Transverse colon (tissue), 4 donors: ENCODE measurements at regions of chr1 and their contacts with region 1.

Region 1: GRCh38 chr1:203273206-203273868 is 32.0 kb upstream of the BTG2 start:
- DNase-seq: peak; percentile 92
- H3K4me3 ChIP-seq: peak overlapping the region in 2 of 4 donors; percentile 25 to 30
- H3K27ac ChIP-seq: peak overlapping the region; percentile 83 to 89 (median 87)
- H3K4me1 ChIP-seq: peaks cover 33 to 73% (median 49%) of the 10 kb centered on the region in 4 donors
- H3K27me3 ChIP-seq: no peaks in the 10 kb centered on the region
- CTCF ChIP-seq: peak; percentile 97 to 100 (median 99)
- EP300 ChIP-seq: no peak
- POLR2A ChIP-seq: no peak

Region 2: DNA sequence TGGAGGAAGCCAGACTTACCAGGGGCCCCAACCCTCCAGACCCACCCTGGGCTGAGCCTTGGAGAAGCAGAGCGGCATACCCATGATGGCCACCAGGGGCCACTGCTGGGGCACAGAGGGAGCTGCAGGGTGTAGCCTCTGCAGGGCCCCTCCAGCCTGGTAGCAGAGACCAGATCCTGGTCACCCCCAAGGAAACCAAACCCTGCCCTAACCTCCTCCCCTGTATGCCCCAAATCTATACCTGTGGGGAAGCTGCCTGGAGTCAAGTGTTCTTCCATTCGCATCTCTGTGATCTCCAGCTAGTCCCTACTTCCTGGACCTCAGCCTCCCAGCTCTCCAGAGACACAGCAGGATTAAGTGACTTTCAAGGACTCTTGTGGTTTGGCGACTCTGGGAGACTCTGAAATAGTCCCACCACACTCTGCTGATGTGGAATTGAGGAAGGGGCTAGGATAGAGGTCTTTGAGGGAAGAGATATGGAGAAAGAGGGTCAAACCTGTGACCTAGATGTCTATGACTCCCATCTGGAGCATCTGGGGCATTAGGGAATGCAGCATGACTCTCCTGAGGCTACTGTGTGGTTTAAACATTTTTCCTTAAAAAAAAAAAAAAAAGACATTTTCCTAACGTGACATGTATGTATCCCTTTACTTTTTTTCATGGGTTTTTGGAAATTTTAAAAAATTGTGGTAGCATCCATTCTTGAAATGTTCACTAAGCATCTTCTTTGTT is 1563.6 kb before region 1 on chr1:
- in situ Hi-C with region 1: no loop called
- intact Hi-C with region 1: loop called (anchors 5 kb)
- DNase-seq: peak; percentile 77
- H3K4me3 ChIP-seq: no peak overlapping the region
- H3K27ac ChIP-seq: peak overlapping the region in 2 of 4 donors; percentile 15 to 49
- H3K4me1 ChIP-seq: peaks cover 32 to 46% (median 38%) of the 10 kb centered on the region in 4 donors
- H3K27me3 ChIP-seq: no peaks in the 10 kb centered on the region
- CTCF ChIP-seq: peak; percentile 87 to 92 (median 91)
- EP300 ChIP-seq: no peak
- POLR2A ChIP-seq: no peak

Region 3: DNA sequence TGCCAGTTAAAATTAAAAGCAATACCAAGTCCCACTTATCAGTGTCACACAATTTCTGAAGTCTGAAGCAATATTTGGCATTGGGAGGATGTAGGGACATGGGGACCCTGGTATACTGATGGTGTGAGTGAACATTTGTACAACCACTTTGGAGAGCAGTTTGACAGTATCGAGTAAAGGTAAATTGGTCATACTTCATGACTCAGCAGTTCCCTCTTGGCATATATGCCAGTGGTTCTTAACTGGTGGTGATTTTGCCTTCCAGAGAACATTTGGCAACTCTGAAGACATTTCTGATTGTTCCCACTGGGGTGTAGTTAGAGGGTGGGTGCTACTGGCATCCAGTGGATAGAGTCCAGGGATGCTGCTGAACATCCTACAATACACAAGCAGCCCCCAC is 57.9 kb after region 1 on chr1:
- in situ Hi-C with region 1: loop called (anchors 5 kb)
- intact Hi-C with region 1: no loop called
- DNase-seq: no peak
- H3K4me3 ChIP-seq: no peak overlapping the region
- H3K27ac ChIP-seq: no peak overlapping the region
- H3K4me1 ChIP-seq: peaks cover 19 to 30% (median 28%) of the 10 kb centered on the region in 4 donors
- H3K27me3 ChIP-seq: no peaks in the 10 kb centered on the region
- CTCF ChIP-seq: no peak
- EP300 ChIP-seq: no peak
- POLR2A ChIP-seq: no peak

Region 4: DNA sequence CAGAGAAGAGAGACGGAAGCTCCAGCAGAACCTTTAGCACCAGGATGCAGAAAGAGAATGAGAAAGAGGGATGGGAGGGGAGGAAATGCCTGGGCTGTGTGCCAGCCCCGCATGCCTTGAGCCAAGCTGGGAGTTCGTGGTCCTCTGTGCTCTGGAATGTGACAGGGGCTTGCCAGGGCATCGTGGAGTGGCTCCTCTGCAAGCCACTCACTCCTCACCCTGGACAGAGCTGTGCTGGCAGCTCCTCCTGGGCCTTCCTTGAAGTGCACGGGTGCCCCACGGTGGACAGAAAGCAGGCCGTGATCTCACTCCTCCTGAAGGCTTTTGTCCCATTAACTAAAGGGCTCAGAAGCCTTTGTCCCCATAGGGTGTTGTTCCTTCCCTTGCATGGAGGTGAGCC is 167.4 kb after region 1 on chr1:
- in situ Hi-C with region 1: loop called in 2 of 4 experiments (anchors 10 to 25 kb)
- intact Hi-C with region 1: no loop called
- DNase-seq: peak; percentile 83
- H3K4me3 ChIP-seq: no peak overlapping the region
- H3K27ac ChIP-seq: peak overlapping the region; percentile 24 to 47 (median 26)
- H3K4me1 ChIP-seq: peaks cover 17 to 29% (median 19%) of the 10 kb centered on the region in 4 donors
- H3K27me3 ChIP-seq: no peaks in the 10 kb centered on the region
- CTCF ChIP-seq: peak; percentile 61 to 78 (median 71)
- EP300 ChIP-seq: no peak
- POLR2A ChIP-seq: no peak

Region 5: GRCh38 chr1:203480525-203481084 is 207.3 kb after region 1 on chr1:
- in situ Hi-C with region 1: loop called in 3 of 4 experiments (anchors 10 kb)
- intact Hi-C with region 1: loop called (anchors 5 kb)
- DNase-seq: peak; percentile 91
- H3K4me3 ChIP-seq: no peak overlapping the region
- H3K27ac ChIP-seq: peak overlapping the region; percentile 75 to 89 (median 80)
- H3K4me1 ChIP-seq: peaks cover 9 to 34% (median 19%) of the 10 kb centered on the region in 4 donors
- H3K27me3 ChIP-seq: no peaks in the 10 kb centered on the region
- CTCF ChIP-seq: no peak
- EP300 ChIP-seq: no peak
- POLR2A ChIP-seq: no peak

Region 6: DNA sequence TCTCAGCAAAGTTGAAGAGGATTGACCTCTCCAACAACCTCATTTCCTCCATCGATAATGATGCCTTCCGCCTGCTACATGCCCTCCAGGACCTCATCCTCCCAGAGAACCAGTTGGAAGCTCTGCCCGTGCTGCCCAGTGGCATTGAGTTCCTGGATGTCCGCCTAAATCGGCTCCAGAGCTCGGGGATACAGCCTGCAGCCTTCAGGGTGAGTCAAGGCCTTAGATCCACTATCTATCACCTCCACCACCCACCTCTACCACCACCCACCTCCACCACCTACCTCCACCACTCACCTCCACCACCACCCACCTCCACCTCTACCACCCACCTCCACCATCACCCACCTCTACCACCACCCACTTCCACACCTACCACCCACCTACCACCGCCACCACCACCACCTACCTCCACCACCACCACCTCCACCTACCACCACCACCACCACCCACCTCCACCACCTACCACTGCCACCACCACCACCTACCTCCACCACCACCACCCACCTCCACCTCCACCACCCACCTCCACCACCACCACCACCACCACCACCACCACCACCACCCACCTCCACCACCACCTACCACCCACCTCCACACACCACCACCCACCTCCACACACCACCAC is 226.4 kb after region 1 on chr1:
- in situ Hi-C with region 1: no loop called
- intact Hi-C with region 1: no loop called
- DNase-seq: no peak
- H3K4me3 ChIP-seq: no peak overlapping the region
- H3K27ac ChIP-seq: no peak overlapping the region
- H3K4me1 ChIP-seq: peaks cover 0 to 4% (median 2%) of the 10 kb centered on the region in 4 donors
- H3K27me3 ChIP-seq: no peaks in the 10 kb centered on the region
- CTCF ChIP-seq: no peak
- EP300 ChIP-seq: no peak
- POLR2A ChIP-seq: no peak